ENCODE measurements at regions of chr16 and their contacts with region 1.

Region 1: GRCh38 chr16:85615852-85616606 is 2.9 kb downstream of the GSE1 start:
- DNase-seq: peak in 3 of 4 experiments; percentile 48 to 93 (median 81)
- ATAC-seq: peak; percentile 48
- H3K4me3 ChIP-seq: peak overlapping the region; percentile 85
- H3K27ac ChIP-seq: peak overlapping the region; percentile 99
- H3K4me1 ChIP-seq: peaks cover 55 to 89% of the 10 kb centered on the region in 2 experiments
- H3K27me3 ChIP-seq: no peaks in the 10 kb centered on the region
- CTCF ChIP-seq: peak; percentile 90 to 98 (median 90)
- EP300 ChIP-seq: 0 out of 2 replicates have a peak, but pooled peaks have one; percentile 9
- POLR2A ChIP-seq: no peak; the same call in none of the 2 replicates
- RAD21 ChIP-seq: peak; percentile 43 to 70

Region 2: DNA sequence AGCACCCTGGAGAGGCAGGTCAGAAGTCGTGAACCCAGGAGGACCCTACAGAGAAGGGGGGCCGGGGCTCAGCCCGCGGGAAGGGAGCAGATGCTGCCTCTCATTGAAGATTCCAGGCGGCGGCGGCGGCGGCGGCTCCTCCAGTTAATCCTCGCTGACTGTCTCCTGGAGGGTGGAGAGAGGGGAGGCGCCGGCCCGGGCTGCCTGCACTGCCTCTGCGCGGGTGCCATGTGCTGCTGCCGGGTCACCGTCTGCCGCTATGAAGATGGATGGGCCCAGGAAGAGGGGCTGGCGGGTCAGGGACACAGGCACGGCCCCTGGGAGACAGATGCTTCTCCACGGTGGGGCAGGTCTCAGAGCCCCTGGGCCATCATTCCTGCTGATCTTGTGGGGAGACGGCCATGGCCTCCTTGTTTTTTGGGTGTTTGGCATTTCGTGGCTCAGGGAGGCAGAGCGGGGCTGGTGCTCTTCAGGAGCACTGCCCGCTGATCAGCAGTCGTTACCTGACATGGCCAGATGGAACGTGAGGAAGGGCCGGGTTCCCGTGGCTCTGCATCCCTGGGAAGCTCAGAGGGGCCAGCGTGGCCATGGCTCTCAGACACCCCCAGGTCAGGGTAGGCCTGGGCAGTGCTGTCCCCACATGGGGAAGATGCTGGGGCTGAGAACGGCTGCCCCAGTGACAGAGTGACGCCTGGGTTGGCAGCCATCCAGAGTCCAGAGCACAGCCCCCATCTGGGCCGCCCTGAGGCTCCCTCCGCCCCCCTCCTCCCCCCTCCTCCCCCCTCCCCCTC is 36.6 kb after region 1 on chr16:
- CTCF ChIA-PET with region 1: no interaction called
- POLR2A ChIA-PET with region 1: interaction called, 3 read pairs
- in situ Hi-C with region 1: no loop called
- intact Hi-C with region 1: loop called (anchors 1 kb)
- DNase-seq: peak; percentile 80 to 88 (median 84)
- ATAC-seq: peak; percentile 84
- H3K4me3 ChIP-seq: no peak overlapping the region
- H3K27ac ChIP-seq: peak overlapping the region; percentile 53; the same call in 1 of the 3 replicates
- H3K4me1 ChIP-seq: peaks cover 9 to 86% of the 10 kb centered on the region in 2 experiments; a peak in 4 of 5 replicates
- H3K27me3 ChIP-seq: no peaks in the 10 kb centered on the region
- CTCF ChIP-seq: no peak
- EP300 ChIP-seq: no peak
- POLR2A ChIP-seq: peak; percentile 30; the same call in 1 of the 2 replicates
- RAD21 ChIP-seq: no peak

Region 3: DNA sequence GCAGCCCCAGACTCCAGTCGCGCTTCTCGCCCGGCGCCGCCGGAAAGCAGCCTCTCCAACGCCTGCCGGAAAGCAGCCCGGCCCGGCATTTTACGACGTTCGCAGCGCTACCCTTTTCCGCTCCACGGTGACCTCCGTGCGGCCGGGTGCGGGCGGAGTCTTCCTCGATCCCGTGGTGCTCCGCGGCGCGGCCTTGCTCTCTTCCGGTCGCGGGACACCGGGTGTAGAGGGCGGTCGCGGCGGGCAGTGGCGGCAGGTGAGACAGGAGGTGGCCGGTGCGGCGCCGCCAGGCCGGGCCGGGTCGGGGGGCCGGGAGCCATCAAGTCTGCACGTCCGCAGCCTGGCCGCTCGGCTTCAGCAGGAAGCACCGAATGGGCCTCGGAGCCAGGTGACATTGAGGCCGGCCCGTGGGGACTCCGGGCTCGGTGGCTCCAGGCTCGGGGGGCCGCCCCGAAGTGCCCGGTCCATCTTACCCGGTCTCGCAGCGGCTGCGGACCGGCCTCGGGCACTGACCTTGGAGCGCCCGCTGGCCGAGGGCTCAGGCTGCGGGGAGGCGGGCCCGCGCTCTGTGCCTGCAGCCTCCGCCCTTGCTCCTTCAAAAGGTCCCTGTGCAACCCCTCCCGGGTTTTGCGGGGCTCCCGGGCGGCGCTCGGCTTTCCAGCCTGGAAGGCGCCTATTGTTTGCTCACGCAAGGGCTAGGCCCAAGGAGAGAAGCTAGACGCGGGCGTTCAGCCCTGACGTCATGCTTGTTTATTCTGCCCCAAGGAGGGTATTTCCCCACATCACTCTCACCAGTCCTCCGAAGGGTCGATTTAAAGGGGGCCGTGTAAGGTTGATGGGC is 183.7 kb after region 1 on chr16 and contains the starts of genes COX4I1 and EMC8:
- CTCF ChIA-PET with region 1: no interaction called
- POLR2A ChIA-PET with region 1: no interaction called
- in situ Hi-C with region 1: no loop called
- intact Hi-C with region 1: no loop called
- DNase-seq: peak in 3 of 4 experiments; percentile 90 to 96 (median 92)
- ATAC-seq: peak; percentile 97
- H3K4me3 ChIP-seq: peak within 1 kb of the TSS; percentile 97
- H3K27ac ChIP-seq: peak within 1 kb of the TSS; percentile 96
- H3K4me1 ChIP-seq: peaks cover 8 to 11% of the 10 kb centered on the region in 2 experiments; a peak in 4 of 5 replicates
- H3K27me3 ChIP-seq: no peaks in the 10 kb centered on the region
- CTCF ChIP-seq: no peak
- EP300 ChIP-seq: no peak
- POLR2A ChIP-seq: peak; percentile 95
- RAD21 ChIP-seq: no peak
- polyA plus RNA-seq, gene COX4I1: 1,936 to 2,356 TPM
- polyA plus RNA-seq, gene EMC8: 11.4 to 14.0 TPM

Measured in K562 (cell line).